ENCODE measurements at regions of chr10 and their contacts with region 1.

Region 1: GRCh38 chr10:45809837-45810236 is 37.5 kb downstream of the AGAP4 start:
- DNase-seq: no peak
- ATAC-seq: no peak
- H3K4me3 ChIP-seq: no peak overlapping the region
- H3K27ac ChIP-seq: no peak overlapping the region
- H3K4me1 ChIP-seq: no peaks in the 10 kb centered on the region
- H3K27me3 ChIP-seq: no peaks in the 10 kb centered on the region
- CTCF ChIP-seq: no peak

Region 2: DNA sequence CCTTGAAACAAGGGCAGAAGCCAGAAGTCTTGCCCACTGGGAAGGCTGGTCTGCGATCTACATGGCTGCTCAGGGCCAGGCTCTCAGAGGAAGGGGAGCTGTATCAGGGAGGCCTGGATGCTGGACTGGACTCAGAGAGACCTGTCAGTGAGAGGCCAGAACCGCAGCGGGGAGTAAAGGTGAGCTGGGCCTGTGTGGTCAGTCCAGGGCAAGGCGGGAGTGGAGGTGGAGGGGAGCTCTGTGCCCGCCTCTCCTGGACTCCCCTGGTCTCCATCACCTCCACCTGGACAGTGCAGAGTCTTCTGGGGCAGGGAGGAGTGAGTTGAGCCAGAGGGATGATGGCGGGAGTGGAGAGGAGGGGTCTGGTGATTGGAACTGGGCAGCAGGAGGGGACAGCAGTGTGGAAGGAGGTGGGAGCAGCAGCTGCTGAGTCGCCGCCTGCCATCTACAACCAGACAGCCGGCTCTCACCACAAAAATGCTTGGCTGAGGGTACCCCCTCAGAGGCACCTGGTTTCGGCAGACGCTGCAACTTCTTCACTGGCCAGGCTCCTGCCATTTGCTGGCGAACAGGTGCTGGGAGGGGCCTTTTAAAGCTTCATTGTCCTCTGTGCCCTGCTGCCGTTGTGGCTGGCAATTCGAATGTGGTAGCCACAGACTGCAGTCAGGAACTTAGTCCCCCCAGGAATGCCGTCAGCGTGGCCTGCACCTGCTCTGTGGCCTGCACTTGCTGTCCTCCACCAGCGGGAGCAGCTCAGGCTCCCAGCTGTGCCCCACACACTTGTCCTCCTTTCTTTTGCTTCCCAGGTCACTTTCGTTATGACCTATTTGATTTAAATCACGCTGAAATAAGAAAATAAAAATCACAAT is 846.7 kb before region 1 on chr10:
- CTCF ChIA-PET with region 1: interaction called, 10 read pairs
- POLR2A ChIA-PET with region 1: no interaction called
- in situ Hi-C with region 1: no loop called
- intact Hi-C with region 1: no loop called
- DNase-seq: no peak
- ATAC-seq: no peak; the same call in 1 of the 2 replicates
- H3K4me3 ChIP-seq: peak overlapping the region in 1 of 2 experiments; percentile 20; a peak in 2 of 4 replicates
- H3K27ac ChIP-seq: peak overlapping the region; percentile 67
- H3K4me1 ChIP-seq: peaks cover 55% of the 10 kb centered on the region
- H3K27me3 ChIP-seq: no peaks in the 10 kb centered on the region
- CTCF ChIP-seq: peak; percentile 54